Calu3 (cell line): ENCODE measurements at regions of chr11 and their contacts with region 1.

Region 1: DNA sequence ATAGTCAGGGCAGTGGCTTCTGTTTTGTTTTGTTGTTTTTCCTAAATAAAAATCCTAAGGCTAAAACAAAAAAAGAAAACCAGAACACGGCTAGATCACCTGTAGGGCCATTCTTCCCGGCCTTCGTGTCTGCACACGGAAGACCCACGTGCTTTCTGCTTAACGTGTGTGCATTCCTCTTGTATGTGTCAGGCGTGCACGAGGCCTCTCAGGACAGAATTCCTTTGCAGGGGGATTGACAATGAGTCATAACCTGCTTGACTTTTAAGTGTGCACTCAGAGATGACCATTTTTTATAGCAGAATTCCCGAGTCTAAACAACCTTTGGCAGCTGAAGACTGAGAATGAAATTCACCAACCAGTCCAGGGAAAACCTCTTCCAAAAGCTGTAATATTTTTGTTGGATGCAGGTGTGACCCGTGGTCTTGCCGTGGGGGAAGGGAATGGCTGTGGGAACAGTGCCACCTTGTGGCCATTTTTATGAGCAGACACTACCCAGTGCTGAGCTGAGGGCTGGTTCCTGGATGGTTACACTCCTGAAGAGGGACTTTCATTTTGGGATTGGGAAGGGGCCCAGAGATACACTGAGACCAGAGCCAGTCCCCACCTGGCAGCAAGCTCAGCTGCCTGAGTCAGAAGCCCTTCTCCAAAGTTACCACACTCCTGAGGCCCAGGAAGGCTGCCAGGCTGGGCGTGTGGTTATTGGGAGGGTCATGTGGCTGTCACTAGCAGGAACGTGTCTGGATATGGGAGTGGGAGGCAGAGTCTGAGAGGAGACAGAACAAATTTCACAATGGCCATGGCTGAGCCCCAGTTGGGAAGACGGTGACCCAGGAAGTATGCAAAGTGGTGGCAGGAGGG is 35.8 kb upstream of the DKK3 start:
- DNase-seq: peak; percentile 80
- H3K4me3 Mint-ChIP-seq: peak overlapping the region; percentile 60
- H3K27ac Mint-ChIP-seq: peak overlapping the region; percentile 97
- H3K4me1 Mint-ChIP-seq: peaks cover 45% of the 10 kb centered on the region
- H3K27me3 Mint-ChIP-seq: no peaks in the 10 kb centered on the region
- CTCF ChIP-seq: peak; percentile 88

Region 2: DNA sequence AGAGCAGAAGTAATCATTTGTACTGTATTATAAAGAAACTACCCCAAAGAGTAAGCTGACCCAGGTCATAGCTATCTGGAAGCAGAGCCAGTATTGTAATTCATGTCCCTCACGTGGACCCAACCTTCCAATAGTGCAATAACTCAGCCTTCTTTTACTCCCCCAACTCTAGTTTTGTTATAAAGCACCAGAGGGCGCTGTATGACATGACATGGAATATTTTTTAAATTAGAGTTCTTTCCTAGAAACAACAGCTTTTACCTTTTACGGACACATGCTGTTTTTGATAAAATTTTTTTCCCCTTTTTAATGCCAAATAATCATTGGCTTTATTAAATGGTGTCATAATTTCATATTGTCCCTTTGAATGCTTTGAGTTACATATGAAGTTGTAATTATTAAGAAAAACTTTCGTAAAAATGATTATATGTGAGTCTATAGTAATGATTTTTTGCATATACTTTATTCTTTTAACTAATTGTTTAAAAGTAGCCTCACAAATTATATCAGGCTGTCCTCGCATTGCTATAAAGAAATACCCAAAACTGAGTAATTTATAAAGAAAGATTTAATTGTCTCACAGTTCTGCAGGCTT is 112.6 kb before region 1 on chr11:
- CTCF ChIA-PET with region 1: interaction called, 12 read pairs
- intact Hi-C with region 1: loop called (anchors 1 kb)
- DNase-seq: peak; percentile 20
- H3K4me3 Mint-ChIP-seq: no peak overlapping the region
- H3K27ac Mint-ChIP-seq: no peak overlapping the region
- H3K4me1 Mint-ChIP-seq: peaks cover 5% of the 10 kb centered on the region
- H3K27me3 Mint-ChIP-seq: no peaks in the 10 kb centered on the region
- CTCF ChIP-seq: peak; percentile 52

Region 3: DNA sequence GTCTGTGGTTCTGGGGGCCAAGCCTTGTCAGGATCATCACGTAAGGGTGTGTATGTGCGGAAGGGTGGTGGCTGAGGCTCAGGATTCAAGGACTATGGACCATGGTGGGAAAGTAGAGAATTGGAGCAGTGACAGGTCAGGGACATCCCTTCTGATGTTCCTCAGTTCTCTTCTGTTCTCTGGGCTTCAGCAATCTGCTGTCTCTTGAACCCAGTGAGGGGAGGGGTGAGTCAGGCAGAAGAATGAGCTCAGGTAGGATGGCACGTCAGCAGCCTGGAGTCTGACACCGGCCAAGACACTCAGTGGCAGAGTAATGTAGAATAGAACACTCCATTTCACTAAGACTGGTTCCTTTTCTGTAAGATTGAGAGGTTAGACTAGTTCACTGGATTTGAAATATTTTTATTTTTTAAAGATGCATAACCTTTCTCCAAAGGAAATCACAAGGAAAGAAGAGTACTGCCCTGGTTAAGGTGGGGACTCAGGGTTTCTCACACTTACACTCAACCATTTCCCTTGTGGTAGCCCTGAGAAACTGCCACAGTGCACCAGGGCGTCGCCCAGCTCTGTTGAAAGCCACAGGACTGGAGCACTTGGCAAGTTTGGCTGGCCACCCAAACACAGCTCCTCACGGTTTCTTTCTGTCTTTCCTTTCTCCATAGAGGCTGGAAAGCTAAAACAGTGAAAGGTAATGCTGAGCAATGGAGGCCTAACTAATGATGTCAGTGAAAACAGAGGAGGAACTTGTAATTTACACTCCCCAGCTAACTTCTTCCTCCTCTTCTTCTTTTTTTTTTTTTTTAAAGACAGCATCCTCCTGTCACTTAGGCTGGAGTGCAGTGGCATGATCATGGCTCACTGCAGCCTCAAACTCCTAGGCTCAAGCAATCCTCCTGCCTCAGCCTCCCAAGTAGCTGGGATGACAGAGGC is 43.2 kb after region 1 on chr11:
- CTCF ChIA-PET with region 1: interaction called, 11 read pairs
- intact Hi-C with region 1: loop called (anchors 5 kb)
- DNase-seq: peak; percentile 55
- H3K4me3 Mint-ChIP-seq: peak overlapping the region; percentile 21
- H3K27ac Mint-ChIP-seq: peak overlapping the region; percentile 99
- H3K4me1 Mint-ChIP-seq: peaks cover 75% of the 10 kb centered on the region
- H3K27me3 Mint-ChIP-seq: no peaks in the 10 kb centered on the region
- CTCF ChIP-seq: no peak

Region 4: DNA sequence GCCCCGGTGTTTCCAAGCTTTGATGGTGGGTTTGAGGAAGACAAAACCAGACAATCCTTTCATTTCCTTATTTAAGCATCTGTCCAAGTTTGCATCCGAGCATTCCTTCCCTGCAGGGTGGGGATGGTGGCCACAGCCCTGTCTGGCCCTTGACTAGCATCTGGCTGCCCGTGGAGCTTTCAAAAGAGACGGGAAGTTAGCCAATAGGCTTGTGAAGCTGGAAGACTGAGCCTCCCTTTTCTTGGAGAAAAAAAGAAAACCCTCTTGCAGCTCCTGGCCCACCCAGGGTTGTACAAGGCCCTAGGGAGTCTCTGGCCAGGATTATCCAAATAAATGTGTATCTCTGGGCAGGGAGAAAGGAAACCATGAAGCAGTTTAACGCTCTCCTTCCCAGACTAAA is 126.8 kb after region 1 on chr11:
- CTCF ChIA-PET with region 1: no interaction called
- intact Hi-C with region 1: no loop called
- DNase-seq: no peak
- H3K4me3 Mint-ChIP-seq: no peak overlapping the region
- H3K27ac Mint-ChIP-seq: no peak overlapping the region
- H3K4me1 Mint-ChIP-seq: peaks cover 61% of the 10 kb centered on the region
- H3K27me3 Mint-ChIP-seq: no peaks in the 10 kb centered on the region
- CTCF ChIP-seq: no peak

Region 5: DNA sequence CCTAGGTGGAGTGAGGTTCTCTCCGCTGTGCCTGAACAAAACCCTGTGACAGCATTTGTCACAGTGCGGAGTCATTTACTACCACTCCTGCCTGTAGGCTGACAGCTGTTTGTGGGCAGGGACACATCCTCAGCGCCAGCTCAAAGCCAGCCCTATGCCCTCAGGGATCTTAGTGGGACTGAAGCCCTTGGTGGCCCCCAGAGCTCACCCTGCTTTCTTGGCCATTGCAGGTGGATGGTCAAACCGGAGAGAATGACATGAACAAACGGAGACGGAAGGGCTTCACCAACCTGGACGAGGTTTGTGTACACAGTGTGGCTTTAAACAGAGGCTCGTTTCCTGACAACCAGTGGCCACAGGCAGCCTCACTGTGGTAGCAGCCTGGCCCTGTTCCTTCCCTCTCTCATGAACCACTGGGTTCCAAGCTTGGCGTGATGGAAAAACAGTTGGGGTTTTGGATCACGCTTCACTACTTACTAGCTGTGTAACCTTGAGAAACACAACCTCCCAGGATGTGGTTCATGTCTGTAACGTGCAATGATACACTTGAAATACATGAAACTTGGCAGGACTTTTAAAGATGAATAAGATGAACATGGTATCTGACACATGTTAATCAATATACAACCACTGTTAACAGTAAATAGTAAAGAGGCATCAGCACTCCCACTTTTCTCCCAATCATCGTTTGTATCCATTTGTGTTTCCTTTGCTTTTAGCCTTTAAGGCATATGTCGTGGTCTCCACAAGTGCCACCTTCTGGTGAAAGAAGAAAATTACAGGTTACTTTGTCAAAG is 192.0 kb after region 1 on chr11:
- CTCF ChIA-PET with region 1: interaction called, 4 read pairs
- intact Hi-C with region 1: loop called (anchors 1 kb)
- DNase-seq: no peak
- H3K4me3 Mint-ChIP-seq: no peak overlapping the region
- H3K27ac Mint-ChIP-seq: no peak overlapping the region
- H3K4me1 Mint-ChIP-seq: peaks cover 7% of the 10 kb centered on the region
- H3K27me3 Mint-ChIP-seq: no peaks in the 10 kb centered on the region
- CTCF ChIP-seq: peak; percentile 55